ENCODE measurements at regions of chr7 and their contacts with region 1.

Region 1: DNA sequence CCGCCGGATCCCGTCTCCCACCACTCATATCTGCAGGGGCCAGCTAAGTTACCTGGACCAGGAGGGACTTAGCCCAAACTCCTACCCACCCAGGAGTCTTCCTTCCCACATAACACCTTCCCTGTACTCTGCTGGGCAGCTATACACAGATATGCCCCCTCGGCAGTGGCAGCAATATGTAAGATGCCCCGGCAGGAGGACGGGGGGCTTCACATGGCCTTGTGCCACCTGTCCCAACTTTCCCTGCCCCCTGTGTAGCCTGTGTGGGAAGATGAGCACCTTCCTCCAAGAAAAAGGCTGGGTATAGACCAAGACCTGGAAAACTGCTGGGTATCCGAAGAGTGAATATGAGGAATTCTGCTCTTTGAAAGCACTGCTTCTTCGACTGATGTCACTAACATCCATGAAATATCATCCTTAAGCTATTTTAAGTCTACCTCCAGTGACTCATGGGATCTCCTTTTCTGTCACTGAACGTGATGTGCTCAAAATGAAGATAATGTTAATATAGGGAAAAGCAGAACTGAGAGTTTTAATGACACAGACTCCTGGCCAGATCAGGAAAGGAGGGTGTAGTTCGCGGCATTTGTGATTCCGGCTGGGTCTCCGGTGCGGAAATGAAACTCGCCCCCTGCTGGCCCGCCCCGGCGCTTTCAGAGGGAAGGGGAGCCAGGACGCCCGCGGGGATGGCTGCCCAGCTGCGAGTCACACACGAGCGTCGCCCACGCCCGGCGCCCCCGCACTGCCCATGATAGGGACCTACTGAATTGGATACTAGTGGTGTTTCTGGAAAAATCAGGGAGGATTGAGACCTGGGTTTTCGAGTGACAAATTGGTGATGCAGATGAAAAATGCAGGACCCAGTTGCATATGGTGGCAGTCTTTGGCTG is 256.9 kb upstream of the NFE2L3 start:
- DNase-seq: peak; percentile 81
- CTCF ChIP-seq: peak; percentile 57

Region 2: DNA sequence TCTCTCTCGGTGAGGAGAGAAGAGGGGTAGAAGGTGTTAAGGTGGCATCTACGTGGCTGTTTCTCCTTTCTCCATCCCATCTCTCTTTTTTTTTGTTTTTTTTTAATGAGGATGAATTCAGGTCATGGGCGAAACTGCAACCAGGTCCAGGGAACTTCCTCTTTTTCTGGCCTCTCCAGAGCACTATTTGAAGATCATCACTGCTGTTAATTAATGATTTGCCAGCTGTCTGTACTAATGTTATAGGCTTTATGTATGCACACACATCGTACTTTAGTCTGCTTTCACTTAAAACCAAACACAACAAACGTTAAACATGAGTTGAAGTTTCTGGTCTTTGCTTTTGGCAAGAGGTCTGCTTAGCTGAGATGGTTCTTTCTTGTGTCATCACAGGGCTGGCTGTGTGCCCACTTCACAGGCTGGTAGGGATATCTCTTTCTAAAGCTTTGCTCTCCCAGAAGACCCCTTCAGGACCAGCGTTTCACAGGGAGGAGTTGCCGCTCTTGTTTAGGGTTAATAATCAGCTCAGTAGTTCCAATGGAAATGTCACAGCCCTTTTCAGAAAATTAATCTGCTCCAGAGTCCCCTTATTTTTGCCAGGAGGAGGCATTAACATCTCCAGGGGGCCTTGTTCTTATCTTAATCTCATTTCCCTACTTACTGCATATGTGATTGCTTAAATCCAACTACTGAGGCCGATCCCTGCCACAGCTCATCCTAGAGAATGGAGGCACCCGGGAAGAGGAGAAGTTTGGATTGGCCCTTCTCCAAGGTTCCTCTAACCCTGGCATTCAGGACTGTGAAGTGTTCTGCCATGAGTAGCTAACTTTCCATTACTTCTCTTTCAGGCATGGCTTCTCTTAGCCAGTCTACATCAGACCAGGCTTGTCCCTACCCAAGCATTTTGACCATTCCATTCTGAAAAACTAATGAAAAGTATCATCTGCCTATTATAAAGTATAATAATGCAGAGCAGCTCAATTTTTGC is 17.1 kb before region 1 on chr7:
- CTCF ChIA-PET with region 1: interaction called, 46 read pairs
- POLR2A ChIA-PET with region 1: no interaction called
- DNase-seq: peak; percentile 47
- CTCF ChIP-seq: no peak

Region 3: DNA sequence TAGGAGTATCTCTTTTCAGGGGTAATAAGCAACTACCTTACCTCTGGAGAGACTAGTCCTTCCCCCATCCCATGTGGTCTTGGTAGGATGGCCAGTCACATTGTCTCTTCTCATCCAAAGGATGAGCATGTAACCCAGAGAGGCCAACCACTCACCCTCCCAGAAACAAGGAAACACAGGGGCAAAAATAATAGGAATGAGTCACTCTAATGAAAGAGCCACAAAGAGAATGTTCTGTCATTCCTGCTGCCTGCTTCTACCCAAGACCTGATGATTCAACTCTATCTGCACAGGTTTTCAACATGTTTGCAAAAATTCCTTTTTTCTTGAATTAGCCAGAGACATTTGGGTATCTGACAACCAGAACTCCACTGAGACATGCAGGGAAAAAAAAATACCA is 157.6 kb after region 1 on chr7:
- CTCF ChIA-PET with region 1: interaction called, 68 read pairs
- POLR2A ChIA-PET with region 1: no interaction called
- DNase-seq: no peak
- CTCF ChIP-seq: no peak

Region 4: GRCh38 chr7:26078437-26079336 is 183.5 kb after region 1 on chr7:
- CTCF ChIA-PET with region 1: interaction called, 26 read pairs
- POLR2A ChIA-PET with region 1: no interaction called
- DNase-seq: peak; percentile 75
- CTCF ChIP-seq: peak; percentile 54

Region 5: DNA sequence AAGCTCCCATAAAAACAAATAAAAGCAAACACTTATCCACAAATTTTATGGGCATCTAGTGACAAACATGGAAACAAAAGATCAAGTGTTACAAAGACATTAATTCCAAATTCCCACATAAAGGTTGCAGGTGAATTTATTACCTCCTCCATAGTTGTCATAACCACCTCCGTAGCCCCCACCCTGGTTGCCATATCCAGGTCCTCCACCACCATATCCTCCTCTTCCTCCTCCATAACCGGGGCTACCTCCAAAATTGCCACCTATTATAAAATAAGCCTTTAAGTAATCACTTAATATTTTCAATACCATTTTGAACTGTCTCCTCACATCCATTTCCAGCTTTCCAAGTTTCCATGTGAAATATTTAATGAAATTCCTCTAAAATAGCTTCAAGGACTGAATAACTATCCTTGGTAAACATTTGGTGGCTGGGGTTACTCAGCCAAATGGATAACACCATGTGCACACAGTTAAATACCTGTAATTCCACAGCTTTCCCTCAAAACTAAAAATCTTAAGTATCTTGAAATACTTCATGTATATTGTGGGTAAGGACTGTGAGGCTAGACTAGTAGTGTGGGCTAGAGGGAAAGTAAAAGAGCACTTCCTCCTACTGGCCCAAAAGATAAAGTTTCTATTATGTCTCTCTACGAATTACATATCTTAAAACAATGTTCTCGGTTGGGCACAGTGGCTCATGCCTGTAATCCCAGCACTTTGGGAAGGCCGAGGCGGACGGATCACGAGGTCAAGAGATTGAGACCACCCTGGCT is 298.5 kb after region 1 on chr7:
- CTCF ChIA-PET with region 1: interaction called, 17 read pairs
- POLR2A ChIA-PET with region 1: interaction called, 7 read pairs
- DNase-seq: no peak
- CTCF ChIP-seq: no peak

Measured in GM10248 (cell line).